OCI-LY7 (cell line): ENCODE measurements at regions of chr12 and their contacts with region 1.

Region 1: DNA sequence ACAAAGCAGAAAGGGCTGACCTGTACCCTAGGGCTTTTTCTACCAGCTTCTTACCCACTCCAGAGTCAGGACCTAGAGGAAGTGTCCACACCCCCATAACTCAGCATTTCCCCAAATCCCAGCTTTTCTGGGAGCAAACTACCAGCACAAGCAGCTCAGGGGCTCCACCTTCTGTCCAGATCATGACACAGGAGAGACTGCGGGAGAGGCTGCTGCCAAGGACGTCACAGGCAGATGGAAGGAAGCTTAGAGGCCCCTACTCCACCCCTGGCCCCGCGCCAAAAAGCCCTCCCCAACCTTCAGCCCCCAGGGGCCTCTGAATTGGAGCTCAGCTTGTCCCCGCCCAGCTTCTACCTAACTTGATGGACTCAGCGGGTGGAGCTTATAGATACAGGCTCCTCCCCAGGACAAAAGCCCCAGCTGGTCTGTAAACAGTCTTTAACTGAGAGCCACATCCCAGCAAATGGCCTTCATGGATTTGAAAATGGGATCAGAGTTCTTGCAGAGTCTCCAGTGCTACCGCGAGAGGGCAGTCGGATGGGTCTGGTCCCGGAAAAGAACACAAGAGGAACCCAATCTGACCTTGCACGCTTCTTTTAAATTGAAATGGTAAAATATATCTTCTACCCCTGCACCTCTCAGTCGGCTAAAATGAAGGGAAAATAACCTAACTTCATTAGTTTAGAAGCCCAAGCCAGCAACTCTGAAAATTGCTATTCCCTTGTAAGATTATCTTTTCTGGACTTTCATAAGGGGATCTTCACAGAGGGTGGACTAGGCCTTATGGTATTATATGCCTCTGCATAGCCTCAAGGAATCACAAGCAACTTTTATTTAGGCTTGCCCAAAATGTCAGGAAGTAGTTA is 6.8 kb upstream of the BAZ2A start:
- DNase-seq: peak; percentile 99
- H3K4me3 ChIP-seq: peak overlapping the region; percentile 76
- H3K27ac ChIP-seq: peak overlapping the region; percentile 92
- H3K4me1 ChIP-seq: peaks cover 53% of the 10 kb centered on the region
- CTCF ChIP-seq: peak; percentile 93

Region 2: GRCh38 chr12:56377310-56377988 is 259.5 kb before region 1 on chr12:
- CTCF ChIA-PET with region 1: no interaction called
- POLR2A ChIA-PET with region 1: no interaction called
- intact Hi-C with region 1: loop called (anchors 2 kb)
- DNase-seq: peak; percentile 54
- H3K4me3 ChIP-seq: peak overlapping the region; percentile 3
- H3K27ac ChIP-seq: peak overlapping the region; percentile 93
- H3K4me1 ChIP-seq: peaks cover 49% of the 10 kb centered on the region
- CTCF ChIP-seq: peak; percentile 58

Region 3: GRCh38 chr12:56593909-56594621 is 42.8 kb before region 1 on chr12:
- CTCF ChIA-PET with region 1: interaction called, 3 read pairs
- POLR2A ChIA-PET with region 1: interaction called, 3 read pairs
- intact Hi-C with region 1: loop called (anchors 1 kb)
- DNase-seq: peak; percentile 72
- H3K4me3 ChIP-seq: no peak overlapping the region
- H3K27ac ChIP-seq: no peak overlapping the region
- H3K4me1 ChIP-seq: peaks cover 8% of the 10 kb centered on the region
- CTCF ChIP-seq: peak; percentile 87

Region 4: DNA sequence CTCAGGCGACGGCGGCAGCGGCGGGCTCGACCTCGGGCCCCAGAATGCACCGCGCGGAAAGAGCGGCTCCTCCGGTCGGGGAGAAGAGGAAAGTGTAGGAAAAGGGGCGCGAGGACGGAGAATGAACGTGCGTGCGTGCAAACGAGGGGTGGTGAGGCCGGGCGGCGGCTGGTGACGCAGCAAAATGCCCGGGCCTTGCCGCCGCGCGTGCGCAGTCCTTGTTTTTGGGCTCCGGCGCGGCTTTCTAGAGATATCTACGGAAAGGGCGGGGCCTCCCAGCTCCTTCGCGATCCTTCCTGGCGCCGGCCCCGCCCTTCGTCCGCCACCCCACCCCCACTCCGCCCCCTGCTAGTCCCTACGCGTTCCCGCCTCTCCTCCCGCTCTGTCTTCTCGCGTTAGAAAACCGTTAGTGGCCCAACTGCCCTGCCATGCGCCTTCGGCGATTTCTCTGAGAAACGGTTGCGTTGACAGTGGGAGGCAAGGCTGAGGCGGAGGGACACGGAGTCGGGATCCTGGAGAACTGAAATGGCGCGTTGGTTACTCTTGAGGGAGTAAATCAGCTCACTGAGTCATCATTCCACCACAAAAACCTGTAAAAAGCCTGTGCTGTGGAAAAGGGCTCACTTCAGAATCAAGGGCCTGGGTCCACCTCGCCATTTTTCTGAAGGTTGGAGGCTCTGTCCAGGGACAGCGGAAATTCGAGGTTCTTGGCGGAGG is 51.4 kb after region 1 on chr12 and contains the start of gene PTGES3:
- CTCF ChIA-PET with region 1: interaction called, 3 read pairs
- POLR2A ChIA-PET with region 1: interaction called, 12 read pairs
- intact Hi-C with region 1: loop called (anchors 1 kb)
- DNase-seq: peak; percentile 98
- H3K4me3 ChIP-seq: peak within 1 kb of the TSS; percentile 94
- H3K27ac ChIP-seq: peak within 1 kb of the TSS; percentile 91
- H3K4me1 ChIP-seq: peaks cover 34% of the 10 kb centered on the region
- CTCF ChIP-seq: no peak
- total RNA-seq, gene PTGES3: 77.3 and 91.2 TPM in 2 replicates

Region 5: GRCh38 chr12:57072661-57073060 is 435.8 kb after region 1 on chr12:
- CTCF ChIA-PET with region 1: no interaction called
- POLR2A ChIA-PET with region 1: no interaction called
- intact Hi-C with region 1: no loop called
- DNase-seq: no peak
- H3K4me3 ChIP-seq: no peak overlapping the region
- H3K27ac ChIP-seq: peak overlapping the region; percentile 26
- H3K4me1 ChIP-seq: peaks cover 18% of the 10 kb centered on the region
- CTCF ChIP-seq: no peak

Region 6: DNA sequence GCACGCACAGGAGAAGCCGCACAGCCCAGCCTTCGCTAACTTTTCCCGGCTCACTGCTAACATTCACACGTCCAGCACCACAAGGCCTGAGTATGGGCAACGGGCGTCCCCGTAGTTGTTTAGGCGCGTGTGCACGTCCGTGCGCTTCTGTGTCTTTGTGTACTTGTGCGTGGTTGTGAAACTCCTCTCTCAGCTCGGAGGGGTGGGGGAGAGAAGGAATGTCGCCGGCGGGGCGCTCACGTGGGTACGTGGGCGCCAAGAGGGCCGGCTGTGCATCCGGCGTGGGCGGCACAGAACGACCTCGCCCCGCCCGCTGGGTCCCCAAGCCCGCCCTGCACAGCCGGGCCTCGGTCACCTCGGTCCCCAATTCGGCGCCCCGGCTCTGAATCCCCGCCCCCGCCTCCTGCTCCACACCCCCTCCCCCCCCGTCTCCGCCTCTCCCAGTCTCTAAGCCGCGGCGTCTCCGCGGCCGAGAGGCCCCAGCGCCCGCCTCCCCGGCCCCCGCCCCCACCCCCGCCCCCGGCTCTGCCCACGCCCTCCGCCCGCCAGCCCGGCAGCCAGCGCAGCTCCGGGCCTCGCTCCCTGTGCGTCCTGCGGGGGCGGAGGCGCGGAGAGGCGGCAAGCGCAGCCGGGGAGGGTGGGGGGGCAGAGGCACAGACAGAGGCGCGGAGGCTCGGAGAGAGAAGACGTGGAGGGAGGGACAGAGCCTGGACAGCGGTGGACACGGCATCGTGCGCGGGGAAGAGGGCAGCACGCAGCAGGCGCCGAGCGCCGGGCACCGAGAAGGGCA is 451.7 kb after region 1 on chr12 and contains the start of gene NAB2:
- CTCF ChIA-PET with region 1: no interaction called
- POLR2A ChIA-PET with region 1: no interaction called
- intact Hi-C with region 1: loop called (anchors 1 kb)
- DNase-seq: peak; percentile 96
- H3K4me3 ChIP-seq: peak within 1 kb of the TSS; percentile 80
- H3K27ac ChIP-seq: peak within 1 kb of the TSS; percentile 88
- H3K4me1 ChIP-seq: peaks cover 42% of the 10 kb centered on the region
- CTCF ChIP-seq: no peak
- total RNA-seq, gene NAB2: 8.5 and 9.6 TPM in 2 replicates